Mammary epithelial cell (primary cell): ENCODE measurements at regions of chr18 and their contacts with region 1.

Region 1: GRCh38 chr18:3623769-3624545 is 174.0 kb downstream of the TGIF1 start:
- DNase-seq: peak; percentile 98
- H3K4me3 ChIP-seq: peak overlapping the region; percentile 18 to 43 (median 39)
- H3K27ac ChIP-seq: peak overlapping the region; percentile 100
- H3K4me1 ChIP-seq: peaks cover 40% of the 10 kb centered on the region
- H3K27me3 ChIP-seq: no peaks in the 10 kb centered on the region
- CTCF ChIP-seq: no peak

Region 2: GRCh38 chr18:3604498-3605408 is 19.2 kb before region 1 on chr18:
- CTCF ChIA-PET with region 1: interaction called, 3 read pairs
- dilution Hi-C with region 1: no loop called
- in situ Hi-C with region 1: no loop called
- intact Hi-C with region 1: loop called (anchors 1 kb)
- DNase-seq: peak; percentile 91
- H3K4me3 ChIP-seq: peak overlapping the region; percentile 25 to 53 (median 42)
- H3K27ac ChIP-seq: peak overlapping the region; percentile 99
- H3K4me1 ChIP-seq: peaks cover 35% of the 10 kb centered on the region
- H3K27me3 ChIP-seq: no peaks in the 10 kb centered on the region
- CTCF ChIP-seq: no peak